ENCODE measurements at regions of chr1 and their contacts with region 1.

Region 1: DNA sequence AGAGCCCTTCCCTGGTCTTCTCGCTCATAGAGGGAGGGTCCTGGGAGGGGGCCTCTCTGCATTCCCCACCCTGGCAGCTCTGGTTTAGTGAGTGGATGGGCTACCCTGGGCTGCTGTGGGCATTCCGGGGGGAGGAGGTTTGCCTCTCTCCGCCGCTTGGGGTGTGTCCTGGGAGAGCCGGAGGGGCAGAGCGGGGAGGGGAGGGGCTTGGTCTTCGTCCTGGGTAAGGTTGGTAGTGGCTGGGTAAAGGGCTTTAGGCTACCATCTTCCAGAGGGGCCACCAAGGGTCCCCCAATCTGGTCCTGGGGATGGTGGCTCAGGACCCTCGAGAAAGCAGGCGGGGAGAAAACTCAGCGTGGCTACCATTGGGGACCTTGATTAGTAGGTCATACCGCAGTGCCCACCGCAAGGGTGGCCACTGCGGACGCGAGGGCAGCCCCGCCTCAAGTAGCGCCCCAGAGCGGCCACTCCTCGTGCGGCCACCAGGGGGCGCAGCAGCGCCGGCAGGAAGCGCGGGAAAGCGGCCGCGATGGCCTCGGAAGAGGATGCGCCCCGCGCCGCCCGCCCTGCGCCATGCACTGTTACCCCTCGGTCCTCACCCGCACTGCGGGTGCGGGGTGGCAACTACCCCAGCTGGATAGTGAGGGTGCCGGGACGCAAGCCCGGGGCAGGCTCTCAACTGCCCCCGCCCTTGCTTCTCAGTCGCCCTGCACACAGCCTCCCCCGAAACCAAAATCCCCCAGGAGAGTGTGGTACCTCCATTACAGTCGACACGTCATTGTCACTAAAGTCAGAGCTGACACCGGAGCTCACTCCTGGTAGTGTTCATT is 44.1 kb upstream of the SLC25A33 start:
- DNase-seq: peak; percentile 76
- H3K4me3 ChIP-seq: peak overlapping the region in 3 of 4 donors; percentile 19 to 44 (median 39)
- H3K27ac ChIP-seq: no peak overlapping the region
- H3K4me1 ChIP-seq: peaks cover 0 to 10% (median 9%) of the 10 kb centered on the region in 4 donors
- H3K27me3 ChIP-seq: no peaks in the 10 kb centered on the region
- CTCF ChIP-seq: peak; percentile 87 to 100 (median 91)
- EP300 ChIP-seq: no peak
- POLR2A ChIP-seq: no peak

Region 2: GRCh38 chr1:9181176-9181906 is 313.8 kb before region 1 on chr1:
- intact Hi-C with region 1: loop called (anchors 5 kb)
- DNase-seq: peak; percentile 83
- H3K4me3 ChIP-seq: peak overlapping the region; percentile 38 to 71 (median 59)
- H3K27ac ChIP-seq: peak overlapping the region in 3 of 4 donors; percentile 41 to 63 (median 61)
- H3K4me1 ChIP-seq: peaks cover 0 to 34% (median 32%) of the 10 kb centered on the region in 4 donors
- H3K27me3 ChIP-seq: peaks cover 9 to 29% (median 20%) of the 10 kb centered on the region in 3 donors
- CTCF ChIP-seq: peak; percentile 80 to 94 (median 86)
- EP300 ChIP-seq: no peak
- POLR2A ChIP-seq: no peak

Region 3: GRCh38 chr1:9269078-9269501 is 226.1 kb before region 1 on chr1:
- intact Hi-C with region 1: loop called (anchors 1 kb)
- DNase-seq: no peak
- H3K4me3 ChIP-seq: no peak overlapping the region
- H3K27ac ChIP-seq: no peak overlapping the region
- H3K4me1 ChIP-seq: peaks cover 0 to 27% (median 18%) of the 10 kb centered on the region in 4 donors
- H3K27me3 ChIP-seq: no peaks in the 10 kb centered on the region
- CTCF ChIP-seq: no peak
- EP300 ChIP-seq: no peak
- POLR2A ChIP-seq: no peak

Region 4: GRCh38 chr1:9281908-9282695 is 213.0 kb before region 1 on chr1:
- intact Hi-C with region 1: no loop called
- DNase-seq: no peak
- H3K4me3 ChIP-seq: no peak overlapping the region
- H3K27ac ChIP-seq: no peak overlapping the region
- H3K4me1 ChIP-seq: peaks cover 0 to 24% (median 19%) of the 10 kb centered on the region in 4 donors
- H3K27me3 ChIP-seq: no peaks in the 10 kb centered on the region
- CTCF ChIP-seq: no peak
- EP300 ChIP-seq: no peak
- POLR2A ChIP-seq: no peak

Region 5: GRCh38 chr1:9292361-9293240 is 202.5 kb before region 1 on chr1 and contains the start of gene SPSB1:
- intact Hi-C with region 1: loop called (anchors 1 kb)
- DNase-seq: peak; percentile 90
- H3K4me3 ChIP-seq: peak within 1 kb of the TSS; percentile 80 to 99 (median 88)
- H3K27ac ChIP-seq: peak within 1 kb of the TSS; percentile 90 to 98 (median 94)
- H3K4me1 ChIP-seq: peaks cover 0 to 61% (median 38%) of the 10 kb centered on the region in 4 donors
- H3K27me3 ChIP-seq: no peaks in the 10 kb centered on the region
- CTCF ChIP-seq: no peak
- EP300 ChIP-seq: no peak
- POLR2A ChIP-seq: peak; percentile 26 to 31
- total RNA-seq, gene SPSB1: 17.4 to 34.3 (median 24.1) TPM

Region 6: GRCh38 chr1:9455487-9456234 is 39.5 kb before region 1 on chr1:
- intact Hi-C with region 1: loop called (anchors 5 kb)
- DNase-seq: peak; percentile 85
- H3K4me3 ChIP-seq: no peak overlapping the region
- H3K27ac ChIP-seq: peak overlapping the region in 2 of 4 donors; percentile 9 to 44
- H3K4me1 ChIP-seq: peaks cover 0 to 10% (median 5%) of the 10 kb centered on the region in 4 donors
- H3K27me3 ChIP-seq: no peaks in the 10 kb centered on the region
- CTCF ChIP-seq: peak; percentile 78 to 86 (median 79)
- EP300 ChIP-seq: no peak
- POLR2A ChIP-seq: no peak

Region 7: DNA sequence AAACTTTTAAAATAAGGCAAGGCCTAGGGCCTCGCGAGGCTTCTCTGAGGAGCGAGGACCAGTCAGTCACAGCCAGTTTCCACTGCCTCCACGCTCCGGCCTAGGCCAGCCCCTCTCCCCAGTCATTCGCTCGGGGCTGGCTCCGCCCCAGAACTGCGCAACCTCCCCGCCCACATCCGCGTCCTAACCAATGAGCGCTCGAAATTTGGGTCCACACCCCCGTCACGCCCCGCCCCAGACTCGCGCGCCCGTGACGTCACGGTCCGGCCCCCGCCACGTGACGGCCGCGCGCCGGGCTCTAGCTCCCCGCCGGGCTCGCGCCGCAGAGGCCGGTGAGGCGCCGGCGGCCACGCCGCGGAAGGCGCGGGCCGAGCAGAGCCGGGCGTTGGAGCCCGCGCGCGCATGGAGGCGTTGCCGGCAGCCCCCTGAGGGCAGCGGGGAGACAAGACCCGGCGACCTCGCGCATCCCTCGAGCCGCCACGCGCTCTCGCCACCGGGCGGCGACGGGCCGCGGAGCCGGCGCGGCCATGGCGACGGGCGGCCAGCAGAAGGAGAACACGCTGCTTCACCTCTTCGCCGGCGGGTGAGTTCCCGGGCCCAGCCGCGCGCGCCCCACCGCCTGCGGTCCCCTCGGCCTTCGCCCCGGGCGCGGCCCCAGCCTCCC is 44.2 kb after region 1 on chr1 and contains the start of gene SLC25A33:
- intact Hi-C with region 1: loop called (anchors 5 kb)
- DNase-seq: peak; percentile 99
- H3K4me3 ChIP-seq: peak within 1 kb of the TSS; percentile 59 to 79 (median 73)
- H3K27ac ChIP-seq: peak within 1 kb of the TSS; percentile 87 to 96 (median 92)
- H3K4me1 ChIP-seq: peaks cover 0 to 28% (median 20%) of the 10 kb centered on the region in 4 donors
- H3K27me3 ChIP-seq: no peaks in the 10 kb centered on the region
- CTCF ChIP-seq: no peak
- EP300 ChIP-seq: peak in 2 of 4 donors; percentile 49 to 62
- POLR2A ChIP-seq: no peak
- total RNA-seq, gene SLC25A33: 3.9 to 11.8 (median 9.0) TPM

Region 8: DNA sequence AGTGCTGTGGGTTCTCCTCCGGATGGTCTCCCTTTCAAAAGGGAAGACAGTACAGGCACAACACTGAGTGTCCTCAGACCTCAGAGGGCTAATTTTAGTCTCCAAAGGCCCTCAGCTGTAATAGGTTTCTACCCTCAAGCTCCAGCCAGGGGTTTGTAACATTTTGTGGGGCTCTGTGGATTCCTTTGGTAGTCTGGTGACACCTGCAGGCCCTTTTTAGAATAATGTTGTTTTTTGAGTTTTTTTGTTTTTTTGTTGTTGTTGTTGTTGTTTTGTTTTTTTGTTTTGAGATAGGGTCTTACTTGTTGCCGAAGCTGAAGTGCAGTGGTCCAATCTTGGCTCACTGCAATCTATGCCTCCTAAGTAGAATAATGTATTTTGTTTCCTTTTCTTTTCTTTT is 78.6 kb after region 1 on chr1:
- intact Hi-C with region 1: loop called (anchors 1 kb)
- DNase-seq: no peak
- H3K4me3 ChIP-seq: no peak overlapping the region
- H3K27ac ChIP-seq: no peak overlapping the region
- H3K4me1 ChIP-seq: no peaks in the 10 kb centered on the region
- H3K27me3 ChIP-seq: no peaks in the 10 kb centered on the region
- CTCF ChIP-seq: peak in 3 of 4 experiments; percentile 16 to 46 (median 38)
- EP300 ChIP-seq: no peak
- POLR2A ChIP-seq: no peak

Measured in sigmoid colon (tissue), 7 donors.